Panc1 (cell line): ENCODE measurements at regions of chr17 and their contacts with region 1.

Region 1: DNA sequence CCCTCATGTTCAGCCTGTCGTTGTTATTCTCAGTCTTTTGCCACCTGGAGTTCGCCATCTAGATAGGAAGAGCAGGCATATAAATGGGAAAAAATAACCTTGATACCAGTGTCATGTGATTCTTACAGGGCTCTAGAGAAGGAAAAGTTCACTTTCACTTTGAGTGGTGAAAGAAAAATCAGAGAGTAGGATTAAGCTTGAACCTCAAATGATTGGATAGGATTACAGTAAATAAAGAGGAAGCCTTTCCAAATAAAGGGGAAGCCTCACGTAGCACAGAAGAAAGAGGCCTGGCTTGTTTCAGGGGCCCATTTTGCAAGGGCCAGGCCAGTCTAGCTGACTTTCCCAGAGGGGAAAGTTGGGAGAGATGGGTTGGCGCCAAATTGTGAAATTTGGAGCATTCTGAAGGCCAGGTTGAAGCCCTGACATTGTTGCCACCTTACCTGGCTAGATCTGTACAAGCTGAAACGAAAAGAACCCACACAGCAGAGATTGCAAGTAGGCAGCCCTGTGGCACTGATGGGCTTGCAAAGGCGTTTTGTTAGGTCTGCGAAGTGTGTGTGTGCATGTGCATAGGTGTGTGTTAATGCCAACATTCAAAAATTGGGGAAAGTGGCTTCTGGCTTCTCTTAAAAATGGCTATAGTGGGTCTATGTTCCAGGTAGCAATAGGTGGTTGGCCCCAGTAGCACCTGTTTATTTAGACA is 38.8 kb downstream of the TMC6 start:
- DNase-seq: no peak
- ATAC-seq: no peak
- H3K4me3 ChIP-seq: no peak overlapping the region
- H3K27ac ChIP-seq: no peak overlapping the region
- H3K4me1 ChIP-seq: no peaks in the 10 kb centered on the region
- H3K27me3 ChIP-seq: no peaks in the 10 kb centered on the region
- CTCF ChIP-seq: no peak

Region 2: DNA sequence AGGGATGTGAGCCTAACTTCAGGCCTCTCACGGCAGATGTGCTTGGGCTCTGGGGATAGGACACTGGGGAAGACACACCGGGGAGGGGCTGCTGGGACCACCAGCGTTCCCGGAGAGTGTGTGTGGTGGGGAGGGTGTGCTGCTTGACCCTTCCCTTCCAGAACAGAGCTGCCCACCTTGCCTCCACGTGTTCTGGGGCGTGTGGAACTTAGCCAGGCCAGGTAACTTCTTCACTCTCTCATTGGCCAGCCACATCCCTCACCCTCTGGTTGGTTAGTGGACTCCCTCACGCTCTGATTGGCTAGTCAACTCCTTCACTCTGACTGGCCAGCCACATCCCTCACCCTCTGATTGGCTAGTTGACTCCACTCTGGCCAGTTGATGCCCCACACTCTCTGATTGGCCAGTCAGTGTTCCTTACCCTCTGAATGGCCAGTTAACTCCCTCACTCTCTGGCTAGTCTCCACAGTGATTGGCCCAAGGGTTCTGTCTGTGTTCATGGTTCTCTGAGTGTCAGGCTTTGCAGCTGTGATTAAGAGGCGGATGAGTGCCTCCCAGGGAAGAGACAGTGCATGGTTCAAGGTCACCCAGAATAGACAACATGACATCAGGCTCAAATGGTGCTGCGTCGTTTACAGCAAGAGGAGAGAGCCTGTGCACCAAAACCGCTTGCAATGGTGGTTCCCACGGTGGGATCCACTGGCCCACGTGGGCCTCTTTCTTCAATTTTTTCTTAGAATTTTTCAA is 151.7 kb after region 1 on chr17:
- CTCF ChIA-PET with region 1: interaction called, 12 read pairs
- POLR2A ChIA-PET with region 1: interaction called, 12 read pairs
- in situ Hi-C with region 1: no loop called
- intact Hi-C with region 1: no loop called
- DNase-seq: no peak
- ATAC-seq: peak; percentile 52
- H3K4me3 ChIP-seq: no peak overlapping the region
- H3K27ac ChIP-seq: no peak overlapping the region
- H3K4me1 ChIP-seq: no peaks in the 10 kb centered on the region
- H3K27me3 ChIP-seq: no peaks in the 10 kb centered on the region
- CTCF ChIP-seq: no peak